ENCODE measurements at regions of chr17 and their contacts with region 1.

Region 1: GRCh38 chr17:28540231-28540630 is 12.2 kb downstream of the UNC119 start:
- DNase-seq: no peak
- ATAC-seq: no peak
- H3K4me3 ChIP-seq: no peak overlapping the region
- H3K27ac ChIP-seq: no peak overlapping the region
- H3K4me1 ChIP-seq: no peaks in the 10 kb centered on the region
- H3K27me3 ChIP-seq: no peaks in the 10 kb centered on the region
- CTCF ChIP-seq: no peak

Region 2: DNA sequence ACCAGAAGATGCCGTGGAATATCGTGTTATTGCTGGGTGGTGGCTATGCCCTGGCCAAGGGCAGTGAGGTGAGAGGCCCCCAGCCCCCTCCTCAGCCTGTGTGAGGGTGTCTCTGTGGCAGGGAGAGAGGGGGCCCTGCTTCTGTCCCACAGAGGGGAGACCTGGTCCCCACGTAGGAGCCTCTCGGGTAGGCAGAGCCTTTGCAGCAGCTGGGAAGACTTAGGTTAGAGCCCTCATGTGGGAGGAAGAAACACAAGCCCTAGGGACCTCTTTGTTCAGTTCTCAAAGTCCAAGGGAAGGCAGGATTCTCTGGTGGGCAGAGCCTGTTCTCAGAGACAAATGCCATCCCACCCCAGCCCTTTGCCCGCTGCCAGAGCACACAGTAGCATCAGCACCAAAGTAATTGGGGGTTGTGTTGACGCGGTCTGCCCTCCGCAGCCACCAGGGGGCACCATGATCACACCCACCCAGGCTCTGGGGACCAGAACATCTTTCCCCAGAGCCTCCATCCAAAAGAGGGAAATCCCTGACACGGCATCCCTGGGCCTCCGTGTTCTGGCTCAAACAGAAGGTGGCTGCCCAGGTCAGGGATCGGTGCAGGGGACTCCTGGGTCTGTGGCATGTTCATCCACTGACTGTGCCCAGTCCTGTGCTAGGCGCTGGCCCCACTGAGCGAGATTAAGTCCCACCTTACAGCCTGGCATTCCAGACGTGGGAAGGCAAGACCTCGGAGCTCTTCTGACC is 45.6 kb before region 1 on chr17:
- CTCF ChIA-PET with region 1: interaction called, 4 read pairs
- POLR2A ChIA-PET with region 1: interaction called, 9 read pairs
- in situ Hi-C with region 1: no loop called
- intact Hi-C with region 1: loop called (anchors 2 kb)
- DNase-seq: peak; percentile 39
- ATAC-seq: peak; percentile 92
- H3K4me3 ChIP-seq: no peak overlapping the region
- H3K27ac ChIP-seq: no peak overlapping the region
- H3K4me1 ChIP-seq: no peaks in the 10 kb centered on the region; the same call in 1 of the 2 replicates
- H3K27me3 ChIP-seq: peaks cover 2% of the 10 kb centered on the region; the same call in 1 of the 2 replicates
- CTCF ChIP-seq: peak; percentile 95

Region 3: GRCh38 chr17:28552246-28552999 is 12.2 kb after region 1 on chr17 and contains the start of gene UNC119:
- CTCF ChIA-PET with region 1: no interaction called
- POLR2A ChIA-PET with region 1: no interaction called
- in situ Hi-C with region 1: no loop called
- intact Hi-C with region 1: no loop called
- DNase-seq: no peak
- ATAC-seq: peak; percentile 94
- H3K4me3 ChIP-seq: peak within 1 kb of the TSS; percentile 72 to 77
- H3K27ac ChIP-seq: peak within 1 kb of the TSS; percentile 62
- H3K4me1 ChIP-seq: peaks cover 9% of the 10 kb centered on the region; the same call in 1 of the 2 replicates
- H3K27me3 ChIP-seq: no peaks in the 10 kb centered on the region
- CTCF ChIP-seq: no peak
- total RNA-seq, gene UNC119: 44.7 TPM

Region 4: DNA sequence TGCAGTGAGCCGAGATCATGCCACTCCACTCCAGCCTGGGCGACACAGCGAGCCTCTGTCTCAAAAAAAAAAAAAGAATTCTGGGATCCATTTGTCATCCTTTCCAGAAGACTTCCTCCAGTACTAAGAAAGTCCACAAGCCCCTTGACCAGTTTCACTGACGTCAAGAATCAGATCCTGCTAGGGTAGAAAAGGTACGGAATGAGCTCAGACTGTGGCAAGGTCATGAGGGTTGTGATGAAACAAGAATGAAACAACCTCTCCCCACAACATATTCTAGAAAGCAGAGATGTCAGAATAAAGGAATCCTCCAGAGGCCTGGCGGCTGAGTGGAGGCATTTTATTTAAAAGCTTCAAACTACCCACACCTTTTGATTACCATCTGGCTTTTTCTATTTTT is 233.5 kb after region 1 on chr17:
- CTCF ChIA-PET with region 1: no interaction called
- POLR2A ChIA-PET with region 1: no interaction called
- in situ Hi-C with region 1: no loop called
- intact Hi-C with region 1: no loop called
- DNase-seq: no peak
- ATAC-seq: no peak
- H3K4me3 ChIP-seq: no peak overlapping the region
- H3K27ac ChIP-seq: no peak overlapping the region
- H3K4me1 ChIP-seq: no peaks in the 10 kb centered on the region
- H3K27me3 ChIP-seq: no peaks in the 10 kb centered on the region
- CTCF ChIP-seq: no peak

Region 5: DNA sequence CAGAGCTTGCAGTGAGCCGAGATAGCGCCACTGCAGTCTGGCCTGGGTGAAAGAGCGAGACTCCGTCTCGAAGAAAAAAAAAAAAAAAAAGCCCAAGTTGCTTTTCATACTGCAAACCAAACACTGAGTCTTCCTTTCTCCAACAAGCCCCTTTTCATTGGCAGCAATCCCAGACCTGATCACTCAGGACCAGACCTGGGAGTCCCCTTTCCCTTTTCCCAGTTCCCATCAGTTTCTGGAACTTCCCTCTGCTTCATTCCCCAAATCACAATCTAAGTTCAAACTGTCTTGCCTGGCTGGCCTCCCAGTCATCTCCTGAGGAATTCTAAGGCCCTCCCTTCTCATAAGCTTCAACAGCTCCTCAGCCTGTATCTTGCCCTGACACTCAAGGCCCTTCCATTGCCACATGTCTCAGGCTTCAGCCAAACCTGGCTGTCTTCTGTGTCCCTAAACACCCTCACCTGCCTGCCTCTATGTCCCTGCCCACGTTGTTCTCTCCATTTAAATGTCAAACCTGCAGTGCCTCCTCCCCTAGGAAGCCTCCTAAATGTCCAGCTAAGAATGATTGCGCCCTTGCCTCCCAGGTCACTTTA is 422.9 kb after region 1 on chr17:
- CTCF ChIA-PET with region 1: no interaction called
- POLR2A ChIA-PET with region 1: no interaction called
- in situ Hi-C with region 1: no loop called
- intact Hi-C with region 1: no loop called
- DNase-seq: no peak
- ATAC-seq: no peak
- H3K4me3 ChIP-seq: no peak overlapping the region
- H3K27ac ChIP-seq: no peak overlapping the region
- H3K4me1 ChIP-seq: no peaks in the 10 kb centered on the region; the same call in 1 of the 2 replicates
- H3K27me3 ChIP-seq: peaks cover 3% of the 10 kb centered on the region; the same call in 1 of the 2 replicates
- CTCF ChIP-seq: no peak

Measured in Panc1 (cell line).